Psoas muscle (tissue), 8 donors: ENCODE measurements at regions of chr16 and their contacts with region 1.

Region 1: DNA sequence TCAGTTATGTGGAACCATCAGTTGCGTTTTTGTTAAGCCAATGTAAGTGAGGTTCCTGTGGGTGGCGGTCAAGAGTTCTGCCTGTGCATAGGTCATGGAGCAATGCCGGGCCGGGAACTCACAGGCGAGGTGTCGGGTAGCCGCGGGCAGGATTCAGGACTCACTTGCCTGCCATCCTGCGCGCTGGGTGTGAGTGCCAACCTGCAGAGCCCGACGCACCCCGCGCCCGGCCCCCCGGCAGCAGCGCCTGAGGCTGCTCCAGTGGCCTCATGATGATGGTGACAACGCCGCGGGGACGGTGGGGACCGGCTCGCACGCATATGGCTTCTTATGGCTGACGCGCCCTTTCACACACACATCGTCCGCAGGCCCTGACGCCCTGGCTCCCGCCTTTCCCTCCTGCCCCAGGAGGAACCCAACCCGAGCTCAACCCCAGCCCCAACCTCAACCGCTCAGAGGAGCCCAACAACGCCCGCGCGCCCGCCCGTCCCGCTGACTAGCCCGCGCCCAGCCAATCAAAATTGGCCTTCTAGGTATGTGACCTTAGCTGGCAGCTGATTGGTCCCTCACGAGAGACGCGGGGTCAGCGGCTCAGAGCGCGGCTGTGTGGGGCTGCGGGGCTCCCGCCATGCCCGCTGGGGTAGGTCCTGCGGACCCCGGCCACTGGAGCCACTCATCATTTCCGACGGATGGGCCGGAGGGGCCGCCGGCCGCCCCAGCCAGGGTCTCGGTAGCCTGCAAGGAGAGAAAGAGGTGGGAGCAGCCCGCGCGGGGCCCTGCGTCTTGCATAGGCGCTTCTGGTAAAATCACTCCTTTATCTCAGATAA is at the start of gene C16orf95:
- DNase-seq: peak; percentile 95 to 98
- ATAC-seq: peak; percentile 96 to 97 (median 96)
- H3K4me3 ChIP-seq: peak within 1 kb of the TSS; percentile 100
- H3K27ac ChIP-seq: peak within 1 kb of the TSS; percentile 96
- H3K4me1 ChIP-seq: peaks cover 16% of the 10 kb centered on the region
- H3K27me3 ChIP-seq: no peaks in the 10 kb centered on the region
- CTCF ChIP-seq: peak; percentile 66
- total RNA-seq, gene C16orf95: 5.3 to 8.1 (median 6.0) TPM

Region 2: GRCh38 chr16:85799497-85800337 is 1517.4 kb before region 1 on chr16 and contains the starts of genes COX4I1 and EMC8:
- intact Hi-C with region 1: loop called in 1 of 2 experiments (anchors 10 kb)
- DNase-seq: peak; percentile 97 to 98
- ATAC-seq: peak; percentile 97 to 99 (median 98)
- H3K4me3 ChIP-seq: peak within 1 kb of the TSS; percentile 100
- H3K27ac ChIP-seq: peak within 1 kb of the TSS; percentile 97
- H3K4me1 ChIP-seq: peaks cover 34% of the 10 kb centered on the region
- H3K27me3 ChIP-seq: no peaks in the 10 kb centered on the region
- CTCF ChIP-seq: no peak
- total RNA-seq, gene COX4I1: 627 to 1,031 (median 770) TPM
- total RNA-seq, gene EMC8: 17.2 to 32.9 (median 21.2) TPM

Region 3: DNA sequence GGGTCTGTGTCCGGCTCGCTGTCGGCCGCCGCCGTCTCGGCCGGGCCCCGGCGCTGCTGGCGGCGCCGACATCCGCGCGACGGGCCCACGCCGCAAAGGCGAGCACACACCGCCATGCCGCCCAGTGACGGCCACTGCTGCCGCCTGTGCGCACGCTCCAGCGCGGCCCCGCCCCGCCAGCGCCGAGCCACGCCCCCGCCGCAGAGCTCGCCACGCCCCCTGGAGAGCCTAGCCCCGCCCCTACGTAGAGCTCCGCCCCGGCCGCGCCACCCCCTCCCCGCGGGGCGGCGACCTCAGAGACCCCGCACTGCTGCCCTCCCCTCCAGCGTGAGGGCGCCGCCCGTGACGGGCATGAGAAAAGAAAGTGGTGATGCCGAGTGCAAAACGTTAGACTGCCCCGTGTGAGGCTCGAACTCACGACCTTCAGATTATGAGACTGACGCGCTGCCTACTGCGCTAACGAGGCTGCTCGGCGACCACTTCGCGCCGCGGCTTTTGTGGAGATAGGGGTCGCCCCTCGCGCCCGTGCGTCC is 66.6 kb after region 1 on chr16 and contains the start of gene FBXO31:
- intact Hi-C with region 1: loop called in 1 of 2 experiments (anchors 2 kb)
- DNase-seq: peak; percentile 85 to 92
- ATAC-seq: peak; percentile 77 to 82 (median 78)
- H3K4me3 ChIP-seq: peak within 1 kb of the TSS; percentile 77
- H3K27ac ChIP-seq: peak within 1 kb of the TSS; percentile 99
- H3K4me1 ChIP-seq: peaks cover 49% of the 10 kb centered on the region
- H3K27me3 ChIP-seq: no peaks in the 10 kb centered on the region
- CTCF ChIP-seq: no peak
- total RNA-seq, gene FBXO31: 88.1 to 103 (median 98.5) TPM

Region 4: DNA sequence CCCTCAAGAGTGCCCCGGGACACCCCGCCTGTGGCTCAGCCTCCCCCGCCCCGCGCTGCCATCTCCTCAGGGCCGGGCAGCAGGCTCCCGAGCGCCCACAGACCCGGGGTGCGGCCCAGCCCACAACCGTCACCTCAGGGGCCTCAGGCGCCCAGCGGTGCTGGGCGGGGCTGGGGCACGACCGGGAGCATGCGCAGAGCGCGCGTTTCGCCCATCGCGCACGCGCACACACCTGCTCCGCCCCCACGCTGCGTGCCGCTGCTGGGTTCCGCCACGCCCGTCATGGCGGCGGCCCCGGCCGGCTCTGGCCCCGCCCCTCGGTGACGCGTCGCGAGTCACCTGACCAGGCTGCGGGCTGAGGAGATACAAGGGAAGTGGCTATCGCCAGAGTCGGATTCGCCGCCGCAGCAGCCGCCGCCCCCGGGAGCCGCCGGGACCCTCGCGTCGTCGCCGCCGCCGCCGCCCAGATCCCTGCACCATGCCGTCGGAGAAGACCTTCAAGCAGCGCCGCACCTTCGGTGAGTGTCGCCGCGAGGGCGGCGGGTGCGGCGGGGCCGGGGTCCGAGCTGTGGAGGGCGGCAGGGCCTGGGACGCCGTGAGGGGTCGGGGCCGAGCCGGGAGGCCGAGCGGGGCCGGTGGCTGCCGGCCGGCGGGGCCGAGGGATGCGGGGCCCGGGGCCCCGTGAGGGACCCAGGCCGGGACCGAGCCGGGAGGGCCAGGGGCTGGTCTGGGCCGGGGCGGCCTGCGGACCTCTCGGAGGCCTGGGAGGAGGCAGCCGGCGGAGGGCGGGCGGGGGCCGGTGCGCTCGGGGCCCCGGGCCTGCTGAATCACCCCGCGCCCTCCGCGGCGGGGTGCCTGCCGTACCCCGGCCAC is 75.0 kb after region 1 on chr16 and contains the start of gene MAP1LC3B:
- intact Hi-C with region 1: loop called (anchors 1 to 5 kb)
- DNase-seq: peak; percentile 96 to 98
- ATAC-seq: peak; percentile 83 to 89 (median 84)
- H3K4me3 ChIP-seq: peak within 1 kb of the TSS; percentile 79
- H3K27ac ChIP-seq: peak within 1 kb of the TSS; percentile 99
- H3K4me1 ChIP-seq: peaks cover 49% of the 10 kb centered on the region
- H3K27me3 ChIP-seq: no peaks in the 10 kb centered on the region
- CTCF ChIP-seq: no peak
- total RNA-seq, gene MAP1LC3B: 117 to 189 (median 142) TPM